Activated CD4-positive, alpha-beta T cell treated with anti-CD3 and anti-CD28 coated beads for 36 hours (primary cell): ENCODE measurements at regions of chr22 and their contacts with region 1.

Region 1: GRCh38 chr22:23219822-23220484 is 39.6 kb downstream of the BCR start:
- DNase-seq: peak; percentile 89
- ATAC-seq: peak; percentile 88
- H3K4me3 Mint-ChIP-seq: peak overlapping the region; percentile 72
- H3K27ac Mint-ChIP-seq: peak overlapping the region; percentile 92
- H3K4me1 Mint-ChIP-seq: peaks cover 100% of the 10 kb centered on the region
- H3K27me3 Mint-ChIP-seq: no peaks in the 10 kb centered on the region

Region 2: GRCh38 chr22:22655452-22656290 is 564.3 kb before region 1 on chr22:
- CTCF ChIA-PET with region 1: no interaction called
- POLR2A ChIA-PET with region 1: interaction called, 12 read pairs
- intact Hi-C with region 1: no loop called
- DNase-seq: no peak
- ATAC-seq: no peak
- H3K4me3 Mint-ChIP-seq: no peak overlapping the region
- H3K27ac Mint-ChIP-seq: no peak overlapping the region
- H3K4me1 Mint-ChIP-seq: peaks cover 17% of the 10 kb centered on the region
- H3K27me3 Mint-ChIP-seq: no peaks in the 10 kb centered on the region

Region 3: GRCh38 chr22:23178512-23179254 is 41.3 kb before region 1 on chr22:
- CTCF ChIA-PET with region 1: interaction called, 8 read pairs
- POLR2A ChIA-PET with region 1: no interaction called
- intact Hi-C with region 1: loop called (anchors 1 to 2 kb)
- DNase-seq: peak; percentile 77
- ATAC-seq: no peak
- H3K4me3 Mint-ChIP-seq: peak overlapping the region; percentile 58
- H3K27ac Mint-ChIP-seq: no peak overlapping the region
- H3K4me1 Mint-ChIP-seq: peaks cover 39% of the 10 kb centered on the region
- H3K27me3 Mint-ChIP-seq: no peaks in the 10 kb centered on the region

Region 4: DNA sequence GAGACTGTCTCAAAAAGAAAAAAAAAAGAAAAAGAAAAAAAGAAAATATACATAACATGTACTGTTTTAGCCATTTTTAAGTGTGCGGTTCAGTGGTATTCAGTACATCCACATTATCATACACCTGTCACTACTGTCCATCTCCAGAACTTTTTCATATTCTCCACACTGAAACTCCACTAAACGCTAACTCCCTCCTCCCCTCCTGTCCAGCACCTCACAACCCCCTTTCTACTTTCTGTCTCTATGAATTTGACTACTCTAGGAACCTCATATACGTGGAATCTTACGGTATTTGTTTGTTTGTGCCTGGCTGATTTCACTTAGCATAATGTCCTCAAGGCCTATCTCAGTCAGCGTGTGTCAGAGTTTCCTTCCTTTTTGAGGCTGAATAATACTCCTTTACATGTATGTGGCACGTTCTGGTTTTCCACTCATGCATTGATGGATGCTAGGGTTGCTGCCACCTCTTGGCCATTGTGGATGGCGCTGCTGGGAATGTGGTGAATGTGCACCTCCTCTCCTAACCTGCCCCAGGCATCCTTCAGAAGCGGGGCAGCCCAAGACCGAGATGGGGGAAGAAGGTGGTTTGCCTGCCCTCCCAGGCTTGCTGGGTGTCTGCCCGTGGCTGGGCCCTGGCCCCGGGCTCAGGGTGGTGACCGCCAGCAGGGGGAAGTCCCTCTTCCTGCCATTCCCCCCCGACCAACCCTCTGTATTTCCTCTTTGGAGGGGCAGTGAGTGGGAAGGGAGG is 20.9 kb after region 1 on chr22:
- CTCF ChIA-PET with region 1: interaction called, 5 read pairs
- POLR2A ChIA-PET with region 1: interaction called, 10 read pairs
- intact Hi-C with region 1: loop called (anchors 1 kb)
- DNase-seq: peak; percentile 72
- ATAC-seq: peak; percentile 34
- H3K4me3 Mint-ChIP-seq: no peak overlapping the region
- H3K27ac Mint-ChIP-seq: peak overlapping the region; percentile 84
- H3K4me1 Mint-ChIP-seq: peaks cover 93% of the 10 kb centered on the region
- H3K27me3 Mint-ChIP-seq: no peaks in the 10 kb centered on the region

Region 5: GRCh38 chr22:23709107-23709506 is 489.2 kb after region 1 on chr22:
- CTCF ChIA-PET with region 1: no interaction called
- POLR2A ChIA-PET with region 1: no interaction called
- intact Hi-C with region 1: loop called in 1 of 2 experiments (anchors 5 kb)
- DNase-seq: no peak
- ATAC-seq: no peak
- H3K4me3 Mint-ChIP-seq: no peak overlapping the region
- H3K27ac Mint-ChIP-seq: peak overlapping the region; percentile 68
- H3K4me1 Mint-ChIP-seq: peaks cover 64% of the 10 kb centered on the region
- H3K27me3 Mint-ChIP-seq: no peaks in the 10 kb centered on the region